ENCODE measurements at regions of chr3 and their contacts with region 1.

Region 1: DNA sequence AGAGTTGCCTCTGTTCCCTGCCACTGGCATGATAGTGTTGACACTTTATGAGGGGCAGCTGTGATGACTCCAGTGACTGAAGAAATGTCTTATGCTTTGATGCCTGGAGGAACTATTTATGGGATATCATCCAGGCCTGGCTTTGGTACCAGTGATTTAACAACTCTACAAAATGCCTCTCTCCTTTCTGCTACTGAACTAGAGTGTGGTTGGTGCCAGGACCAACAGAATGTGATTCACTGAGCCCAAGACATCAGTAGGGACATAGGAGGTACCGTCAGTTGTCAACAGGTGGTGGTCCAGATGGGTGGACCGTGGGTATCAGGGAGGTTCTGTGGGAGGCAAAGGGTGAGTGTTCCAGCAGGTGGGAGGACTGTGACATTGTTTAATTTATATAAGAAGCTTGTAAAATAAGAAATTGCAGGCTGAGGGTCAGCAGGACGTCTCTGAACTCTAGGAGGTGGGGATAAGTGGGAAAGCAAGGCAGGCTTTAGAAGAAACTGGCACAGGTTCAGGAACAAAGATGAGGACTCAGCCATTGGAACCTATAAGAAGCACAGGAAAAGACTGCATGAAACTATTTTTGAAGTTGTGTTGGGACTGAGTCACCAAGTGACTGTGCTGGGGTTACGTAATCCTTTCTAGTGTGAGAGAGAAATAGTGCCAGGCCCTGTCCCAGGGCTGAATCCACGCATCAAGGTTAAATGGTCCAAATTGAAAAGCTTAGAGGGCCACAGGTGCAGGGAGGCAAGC is 28.5 kb upstream of the SLC7A14 start:
- DNase-seq: peak; percentile 83
- H3K4me3 ChIP-seq: no peak overlapping the region
- H3K27ac ChIP-seq: no peak overlapping the region
- H3K4me1 ChIP-seq: peaks cover 7% of the 10 kb centered on the region
- H3K27me3 ChIP-seq: no peaks in the 10 kb centered on the region
- CTCF ChIP-seq: no peak
- POLR2A ChIP-seq: no peak

Region 2: GRCh38 chr3:170523248-170523647 is 91.1 kb before region 1 on chr3:
- CTCF ChIA-PET with region 1: no interaction called
- POLR2A ChIA-PET with region 1: no interaction called
- dilution Hi-C with region 1: no loop called
- intact Hi-C with region 1: loop called (anchors 5 kb)
- DNase-seq: peak; percentile 77
- H3K4me3 ChIP-seq: no peak overlapping the region
- H3K27ac ChIP-seq: peak overlapping the region; percentile 45
- H3K4me1 ChIP-seq: peaks cover 11% of the 10 kb centered on the region
- H3K27me3 ChIP-seq: no peaks in the 10 kb centered on the region
- CTCF ChIP-seq: no peak
- POLR2A ChIP-seq: no peak

Measured in endothelial cell of umbilical vein (primary cell).